CD4-positive, alpha-beta T cell (primary cell): ENCODE measurements at regions of chr22 and their contacts with region 1.

Region 1: DNA sequence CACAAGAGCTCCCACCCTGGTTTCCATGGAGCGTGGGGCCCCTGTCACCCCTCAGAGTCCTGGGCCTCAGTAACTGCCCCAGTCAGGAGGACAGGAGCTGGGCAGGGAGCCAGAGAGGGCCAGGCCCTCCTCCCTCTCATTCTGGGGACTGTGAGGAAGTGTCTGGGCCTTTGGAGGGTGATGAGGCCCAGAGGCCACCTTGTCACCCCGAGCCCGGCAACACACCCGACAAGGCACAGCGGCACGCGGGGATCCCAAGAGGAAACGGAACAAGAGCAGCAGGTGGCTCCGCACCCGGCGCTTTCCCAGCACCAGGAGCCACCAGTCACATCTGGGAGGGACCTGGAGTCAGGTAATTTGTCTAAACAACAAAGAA is 72.1 kb downstream of the CELSR1 start:
- DNase-seq: no peak
- ATAC-seq: no peak
- H3K4me3 ChIP-seq: no peak overlapping the region
- H3K4me3 Mint-ChIP-seq: no peak overlapping the region
- H3K27ac ChIP-seq: no peak overlapping the region
- H3K27ac Mint-ChIP-seq: no peak overlapping the region
- H3K4me1 ChIP-seq: no peaks in the 10 kb centered on the region
- H3K4me1 Mint-ChIP-seq: no peaks in the 10 kb centered on the region
- H3K27me3 ChIP-seq: no peaks in the 10 kb centered on the region
- H3K27me3 Mint-ChIP-seq: no peaks in the 10 kb centered on the region
- CTCF ChIP-seq: no peak

Region 2: GRCh38 chr22:45072322-45072903 is 1392.9 kb before region 1 on chr22:
- CTCF ChIA-PET with region 1: no interaction called
- POLR2A ChIA-PET with region 1: no interaction called
- intact Hi-C with region 1: loop called in 1 of 2 experiments (anchors 5 kb)
- DNase-seq: no peak
- ATAC-seq: no peak
- H3K4me3 ChIP-seq: no peak overlapping the region
- H3K4me3 Mint-ChIP-seq: no peak overlapping the region
- H3K27ac ChIP-seq: no peak overlapping the region
- H3K27ac Mint-ChIP-seq: no peak overlapping the region
- H3K4me1 ChIP-seq: no peaks in the 10 kb centered on the region
- H3K4me1 Mint-ChIP-seq: no peaks in the 10 kb centered on the region
- H3K27me3 ChIP-seq: peaks cover 13 to 20% of the 10 kb centered on the region in 2 experiments
- H3K27me3 Mint-ChIP-seq: peaks cover 50% of the 10 kb centered on the region
- CTCF ChIP-seq: no peak

Region 3: GRCh38 chr22:46390652-46391301 is 74.6 kb before region 1 on chr22:
- CTCF ChIA-PET with region 1: no interaction called
- POLR2A ChIA-PET with region 1: no interaction called
- intact Hi-C with region 1: no loop called
- DNase-seq: no peak
- ATAC-seq: no peak
- H3K4me3 ChIP-seq: no peak overlapping the region
- H3K4me3 Mint-ChIP-seq: no peak overlapping the region
- H3K27ac ChIP-seq: no peak overlapping the region
- H3K27ac Mint-ChIP-seq: no peak overlapping the region
- H3K4me1 ChIP-seq: peaks cover 7% of the 10 kb centered on the region
- H3K4me1 Mint-ChIP-seq: peaks cover 5% of the 10 kb centered on the region
- H3K27me3 ChIP-seq: no peaks in the 10 kb centered on the region
- H3K27me3 Mint-ChIP-seq: no peaks in the 10 kb centered on the region
- CTCF ChIP-seq: no peak